ENCODE measurements at regions of chr15 and their contacts with region 1.

Region 1: GRCh38 chr15:65869127-65869953 is at the start of gene RAB11A:
- DNase-seq: peak; percentile 91 to 97 (median 95)
- ATAC-seq: peak; percentile 96
- H3K4me3 ChIP-seq: peak within 1 kb of the TSS; percentile 94
- H3K4me3 Mint-ChIP-seq: peak within 1 kb of the TSS; percentile 88 to 100 (median 100)
- H3K27ac ChIP-seq: peak within 1 kb of the TSS; percentile 94
- H3K27ac Mint-ChIP-seq: peak within 1 kb of the TSS; percentile 97 to 100 (median 99)
- H3K4me1 ChIP-seq: peaks cover 5 to 24% of the 10 kb centered on the region in 2 donors
- H3K4me1 Mint-ChIP-seq: peaks cover 23 to 37% (median 32%) of the 10 kb centered on the region in 7 donors
- H3K27me3 ChIP-seq: no peaks in the 10 kb centered on the region
- H3K27me3 Mint-ChIP-seq: peaks cover 0 to 5% (median 0%) of the 10 kb centered on the region in 5 donors
- total RNA-seq, gene RAB11A: 80.9 to 201 (median 88.7) TPM

Region 2: GRCh38 chr15:65516997-65517865 is 352.1 kb before region 1 on chr15 and contains the start of gene DPP8:
- CTCF ChIA-PET with region 1: no interaction called
- POLR2A ChIA-PET with region 1: interaction called, 3 read pairs
- intact Hi-C with region 1: loop called (anchors 1 kb)
- DNase-seq: peak; percentile 88 to 96 (median 92)
- ATAC-seq: peak; percentile 98
- H3K4me3 ChIP-seq: peak within 1 kb of the TSS; percentile 75
- H3K4me3 Mint-ChIP-seq: peak within 1 kb of the TSS; percentile 93 to 100 (median 96)
- H3K27ac ChIP-seq: peak within 1 kb of the TSS; percentile 83
- H3K27ac Mint-ChIP-seq: peak within 1 kb of the TSS; percentile 86 to 99 (median 94)
- H3K4me1 ChIP-seq: peaks cover 22 to 25% of the 10 kb centered on the region in 2 donors
- H3K4me1 Mint-ChIP-seq: peaks cover 30 to 51% (median 44%) of the 10 kb centered on the region in 7 donors
- H3K27me3 ChIP-seq: no peaks in the 10 kb centered on the region
- H3K27me3 Mint-ChIP-seq: no peaks in the 10 kb centered on the region
- total RNA-seq, gene DPP8: 38.4 to 54.6 (median 40.8) TPM

Region 3: GRCh38 chr15:65792130-65792987 is 77.0 kb before region 1 on chr15 and contains the start of gene DENND4A:
- CTCF ChIA-PET with region 1: interaction called, 3 read pairs
- POLR2A ChIA-PET with region 1: interaction called, 25 read pairs
- intact Hi-C with region 1: loop called (anchors 1 to 2 kb)
- DNase-seq: peak; percentile 95 to 99 (median 98)
- ATAC-seq: peak; percentile 91
- H3K4me3 ChIP-seq: peak within 1 kb of the TSS; percentile 91
- H3K4me3 Mint-ChIP-seq: peak within 1 kb of the TSS; percentile 89 to 99 (median 93)
- H3K27ac ChIP-seq: peak within 1 kb of the TSS; percentile 99
- H3K27ac Mint-ChIP-seq: peak within 1 kb of the TSS; percentile 94 to 100 (median 98)
- H3K4me1 ChIP-seq: peaks cover 24 to 33% of the 10 kb centered on the region in 2 donors
- H3K4me1 Mint-ChIP-seq: peaks cover 18 to 66% (median 49%) of the 10 kb centered on the region in 7 donors
- H3K27me3 ChIP-seq: no peaks in the 10 kb centered on the region
- H3K27me3 Mint-ChIP-seq: no peaks in the 10 kb centered on the region
- total RNA-seq, gene DENND4A: 40.0 to 67.9 (median 64.6) TPM

Region 4: DNA sequence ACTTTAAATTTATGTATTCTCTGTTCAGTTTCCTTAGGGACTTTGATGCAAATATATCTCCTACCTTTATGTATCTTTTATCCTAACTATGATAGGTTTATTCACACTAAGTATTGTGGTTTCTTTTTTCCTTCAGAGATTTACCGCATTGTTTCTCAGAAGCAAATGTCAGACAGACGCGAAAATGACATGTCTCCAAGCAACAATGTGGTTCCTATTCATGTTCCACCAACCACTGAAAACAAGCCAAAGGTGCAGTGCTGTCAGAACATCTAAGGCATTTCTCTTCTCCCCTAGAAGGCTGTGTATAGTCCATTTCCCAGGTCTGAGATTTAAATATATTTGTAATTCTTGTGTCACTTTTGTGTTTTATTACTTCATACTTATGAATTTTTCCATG is 18.2 kb after region 1 on chr15:
- CTCF ChIA-PET with region 1: no interaction called
- POLR2A ChIA-PET with region 1: interaction called, 40 read pairs
- intact Hi-C with region 1: loop called (anchors 1 kb)
- DNase-seq: peak in 8 of 9 donors; percentile 41 to 89 (median 82)
- ATAC-seq: peak; percentile 93
- H3K4me3 ChIP-seq: no peak overlapping the region
- H3K4me3 Mint-ChIP-seq: peak overlapping the region; percentile 26 to 82 (median 58)
- H3K27ac ChIP-seq: peak overlapping the region; percentile 71
- H3K27ac Mint-ChIP-seq: peak overlapping the region; percentile 84 to 99 (median 96)
- H3K4me1 ChIP-seq: peaks cover 15 to 52% of the 10 kb centered on the region in 2 donors
- H3K4me1 Mint-ChIP-seq: peaks cover 35 to 92% (median 77%) of the 10 kb centered on the region in 7 donors
- H3K27me3 ChIP-seq: no peaks in the 10 kb centered on the region
- H3K27me3 Mint-ChIP-seq: no peaks in the 10 kb centered on the region

Region 5: DNA sequence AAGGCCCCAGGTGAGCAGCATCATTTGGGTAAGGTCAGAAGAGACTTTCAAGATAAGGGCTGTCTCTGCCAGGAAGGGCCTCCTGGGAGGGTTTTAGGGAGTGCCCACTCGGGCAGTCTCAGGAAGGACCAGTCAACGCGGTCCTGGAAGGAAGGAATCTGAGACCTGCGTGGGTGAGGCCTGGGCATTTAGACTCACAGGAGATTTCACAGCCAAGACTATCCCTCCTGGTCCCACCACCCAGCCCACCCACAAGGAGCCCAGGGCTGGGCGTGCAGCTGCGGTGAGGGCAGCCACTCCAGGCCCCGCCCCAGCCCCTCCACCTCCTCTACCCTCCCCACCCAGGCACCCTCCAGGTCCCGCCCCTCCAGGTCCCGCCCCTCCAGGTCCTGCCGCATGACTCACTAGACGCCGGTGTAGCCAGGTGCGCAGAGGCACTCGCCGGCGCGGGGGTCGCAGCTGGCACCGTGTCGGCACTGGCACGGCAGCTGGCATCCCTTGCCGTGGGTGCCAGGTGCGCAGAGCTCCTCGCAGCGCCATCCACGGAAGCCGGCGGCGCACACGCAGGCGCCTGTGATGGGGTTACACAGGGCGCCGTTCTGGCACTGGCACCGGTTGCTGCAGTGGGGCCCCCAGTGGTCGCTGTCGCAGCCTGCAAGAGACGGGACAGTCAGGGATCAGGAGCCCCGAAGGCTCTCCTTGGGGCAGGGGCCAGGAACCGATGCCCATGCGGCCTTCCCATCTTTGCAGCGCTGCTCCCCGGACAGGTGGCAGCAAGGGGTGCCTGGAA is 112.7 kb after region 1 on chr15:
- CTCF ChIA-PET with region 1: no interaction called
- POLR2A ChIA-PET with region 1: no interaction called
- intact Hi-C with region 1: loop called in 1 of 2 experiments (anchors 1 kb)
- DNase-seq: peak; percentile 19 to 76 (median 65)
- ATAC-seq: peak; percentile 90
- H3K4me3 ChIP-seq: peak overlapping the region; percentile 53
- H3K4me3 Mint-ChIP-seq: peak overlapping the region; percentile 55 to 82 (median 71)
- H3K27ac ChIP-seq: no peak overlapping the region
- H3K27ac Mint-ChIP-seq: no peak overlapping the region
- H3K4me1 ChIP-seq: peaks cover 0 to 3% of the 10 kb centered on the region in 2 donors
- H3K4me1 Mint-ChIP-seq: peaks cover 5 to 14% (median 9%) of the 10 kb centered on the region in 7 donors
- H3K27me3 ChIP-seq: no peaks in the 10 kb centered on the region
- H3K27me3 Mint-ChIP-seq: peaks cover 16 to 53% (median 19%) of the 10 kb centered on the region in 5 donors

Region 6: DNA sequence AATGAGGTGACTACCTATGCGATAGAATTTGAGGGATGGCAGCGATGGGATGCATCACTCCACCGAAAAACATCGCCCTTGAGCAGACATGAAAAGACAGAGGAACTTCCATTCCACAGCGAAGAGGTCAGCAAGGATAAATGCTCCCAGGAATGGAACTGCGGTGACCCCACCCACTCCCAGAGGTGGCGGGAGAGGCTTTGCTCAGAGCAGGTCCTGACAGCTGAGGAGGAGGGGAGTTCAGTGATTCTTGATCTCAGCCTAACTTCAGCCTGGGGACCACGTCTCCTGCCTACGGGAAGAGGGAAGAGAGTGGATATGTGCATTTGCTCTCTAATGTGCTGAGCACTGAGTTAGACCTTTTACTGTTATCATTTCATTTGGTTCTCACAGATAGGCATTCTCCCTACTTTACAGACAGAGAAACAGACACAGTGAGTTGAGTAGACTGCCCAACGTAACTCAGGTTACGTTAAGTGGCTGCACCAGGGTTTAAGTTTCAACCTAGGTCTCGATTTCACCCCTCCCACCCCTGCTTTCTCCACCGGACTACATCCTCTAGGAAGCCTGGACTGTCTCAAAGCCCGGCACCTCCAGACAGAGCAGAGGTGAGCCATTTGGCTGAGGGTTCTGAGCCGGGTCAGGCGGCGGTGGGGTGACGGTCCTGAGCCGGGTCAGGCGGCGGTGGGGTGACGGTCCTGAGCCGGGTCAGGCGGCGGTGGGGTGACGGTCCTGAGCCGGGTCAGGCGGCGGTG is 170.0 kb after region 1 on chr15:
- CTCF ChIA-PET with region 1: no interaction called
- POLR2A ChIA-PET with region 1: no interaction called
- intact Hi-C with region 1: no loop called
- DNase-seq: no peak
- ATAC-seq: no peak
- H3K4me3 ChIP-seq: no peak overlapping the region
- H3K4me3 Mint-ChIP-seq: no peak overlapping the region
- H3K27ac ChIP-seq: no peak overlapping the region
- H3K27ac Mint-ChIP-seq: no peak overlapping the region
- H3K4me1 ChIP-seq: no peaks in the 10 kb centered on the region
- H3K4me1 Mint-ChIP-seq: no peaks in the 10 kb centered on the region
- H3K27me3 ChIP-seq: peaks cover 0 to 6% of the 10 kb centered on the region in 2 donors
- H3K27me3 Mint-ChIP-seq: peaks cover 33 to 59% (median 37%) of the 10 kb centered on the region in 5 donors

Region 7: DNA sequence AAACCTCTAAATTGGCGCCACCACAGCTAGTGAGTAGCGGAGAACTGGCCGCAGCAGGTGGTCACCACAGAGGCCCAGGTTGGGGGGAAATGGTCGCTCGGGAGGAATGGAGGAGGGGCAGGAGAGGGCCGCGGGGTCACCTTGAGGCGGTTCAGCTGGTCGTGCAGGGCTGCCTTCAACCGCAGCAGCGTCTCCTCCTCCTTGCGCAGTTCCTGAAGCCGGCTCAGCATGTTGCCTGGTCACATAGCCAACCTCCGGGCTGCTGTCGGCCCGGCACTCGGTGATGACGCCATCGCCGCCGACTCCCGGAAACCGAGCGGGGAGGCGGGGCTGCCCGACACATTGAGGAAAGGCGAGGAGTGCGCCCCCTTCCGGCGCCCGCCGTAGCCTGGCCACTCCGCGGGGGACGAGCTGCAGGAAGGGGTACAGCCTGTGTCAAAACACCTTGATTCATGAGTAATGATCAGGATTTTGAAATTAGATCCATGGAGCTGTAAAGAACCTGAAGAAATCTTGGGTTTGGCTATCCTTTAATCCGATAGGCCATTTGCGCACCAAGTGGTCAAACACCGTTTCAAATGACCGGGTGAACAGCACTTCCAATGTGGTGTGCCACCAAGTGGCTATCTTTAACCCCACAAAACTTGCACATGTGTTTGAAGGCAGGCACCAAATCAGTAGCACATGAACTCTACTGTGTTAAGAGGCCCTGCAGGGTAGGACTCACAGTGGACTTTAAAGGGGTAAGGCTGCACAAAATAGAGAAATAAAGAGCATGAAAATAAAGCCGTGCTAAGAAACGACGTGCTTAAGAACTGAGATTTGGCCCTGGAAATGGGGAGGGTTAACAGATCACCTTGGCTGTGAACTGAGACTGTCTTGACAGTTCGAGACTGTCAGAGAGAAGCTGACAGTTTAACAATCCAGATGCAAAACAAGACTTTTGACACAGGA is 628.4 kb after region 1 on chr15 and contains the start of gene SNAPC5:
- CTCF ChIA-PET with region 1: no interaction called
- POLR2A ChIA-PET with region 1: no interaction called
- intact Hi-C with region 1: loop called in 1 of 2 experiments (anchors 1 kb)
- DNase-seq: peak; percentile 94 to 99 (median 96)
- ATAC-seq: peak; percentile 97
- H3K4me3 ChIP-seq: peak within 1 kb of the TSS; percentile 80
- H3K4me3 Mint-ChIP-seq: peak within 1 kb of the TSS; percentile 89 to 98 (median 97)
- H3K27ac ChIP-seq: peak within 1 kb of the TSS; percentile 91
- H3K27ac Mint-ChIP-seq: peak within 1 kb of the TSS; percentile 94 to 99 (median 98)
- H3K4me1 ChIP-seq: peaks cover 18 to 28% of the 10 kb centered on the region in 2 donors
- H3K4me1 Mint-ChIP-seq: peaks cover 21 to 66% (median 49%) of the 10 kb centered on the region in 7 donors
- H3K27me3 ChIP-seq: no peaks in the 10 kb centered on the region
- H3K27me3 Mint-ChIP-seq: no peaks in the 10 kb centered on the region
- total RNA-seq, gene SNAPC5: 20.4 to 35.9 (median 25.0) TPM

Measured in naive thymus-derived CD4-positive, alpha-beta T cell (primary cell).